Panc1 (cell line): ENCODE measurements at regions of chr11 and their contacts with region 1.

Region 1: GRCh38 chr11:44072757-44073658 is 6.9 kb downstream of the ACCS start:
- DNase-seq: no peak
- ATAC-seq: no peak
- H3K4me3 ChIP-seq: no peak overlapping the region
- H3K27ac ChIP-seq: no peak overlapping the region
- H3K4me1 ChIP-seq: no peaks in the 10 kb centered on the region
- H3K27me3 ChIP-seq: no peaks in the 10 kb centered on the region
- CTCF ChIP-seq: no peak

Region 2: DNA sequence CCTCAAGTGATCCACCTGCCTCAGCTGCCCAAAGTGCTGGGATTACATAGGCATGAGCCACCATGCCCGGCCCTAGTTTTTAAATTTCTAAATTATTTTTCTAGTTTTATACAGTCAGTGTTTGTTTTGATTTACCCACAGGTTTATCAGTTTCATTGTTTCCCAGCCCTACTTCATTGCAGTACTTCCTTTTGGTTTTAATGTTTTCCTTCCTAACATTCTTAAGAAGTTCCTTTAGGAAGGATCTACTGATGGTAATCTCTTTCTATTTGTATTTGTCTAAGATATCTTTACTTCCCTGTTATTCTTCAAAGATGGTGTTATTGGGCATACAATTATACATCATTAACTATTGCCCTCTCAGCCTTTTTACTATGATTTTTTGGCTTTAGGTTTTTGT is 17.5 kb after region 1 on chr11:
- CTCF ChIA-PET with region 1: interaction called, 10 read pairs
- POLR2A ChIA-PET with region 1: interaction called, 16 read pairs
- in situ Hi-C with region 1: no loop called
- intact Hi-C with region 1: no loop called
- DNase-seq: no peak
- ATAC-seq: no peak
- H3K4me3 ChIP-seq: no peak overlapping the region
- H3K27ac ChIP-seq: no peak overlapping the region
- H3K4me1 ChIP-seq: peaks cover 5% of the 10 kb centered on the region; the same call in 1 of the 2 replicates
- H3K27me3 ChIP-seq: no peaks in the 10 kb centered on the region
- CTCF ChIP-seq: no peak

Region 3: GRCh38 chr11:44095506-44096394 is 22.7 kb after region 1 on chr11 and contains the start of gene EXT2:
- CTCF ChIA-PET with region 1: interaction called, 10 read pairs
- POLR2A ChIA-PET with region 1: no interaction called
- in situ Hi-C with region 1: no loop called
- intact Hi-C with region 1: no loop called
- DNase-seq: no peak
- ATAC-seq: peak; percentile 97
- H3K4me3 ChIP-seq: peak within 1 kb of the TSS; percentile 72 to 75
- H3K27ac ChIP-seq: peak within 1 kb of the TSS; percentile 54; the same call in 1 of the 2 replicates
- H3K4me1 ChIP-seq: peaks cover 10% of the 10 kb centered on the region; the same call in 1 of the 2 replicates
- H3K27me3 ChIP-seq: no peaks in the 10 kb centered on the region
- CTCF ChIP-seq: peak; percentile 96
- total RNA-seq, gene EXT2: 57.5 TPM

Region 4: DNA sequence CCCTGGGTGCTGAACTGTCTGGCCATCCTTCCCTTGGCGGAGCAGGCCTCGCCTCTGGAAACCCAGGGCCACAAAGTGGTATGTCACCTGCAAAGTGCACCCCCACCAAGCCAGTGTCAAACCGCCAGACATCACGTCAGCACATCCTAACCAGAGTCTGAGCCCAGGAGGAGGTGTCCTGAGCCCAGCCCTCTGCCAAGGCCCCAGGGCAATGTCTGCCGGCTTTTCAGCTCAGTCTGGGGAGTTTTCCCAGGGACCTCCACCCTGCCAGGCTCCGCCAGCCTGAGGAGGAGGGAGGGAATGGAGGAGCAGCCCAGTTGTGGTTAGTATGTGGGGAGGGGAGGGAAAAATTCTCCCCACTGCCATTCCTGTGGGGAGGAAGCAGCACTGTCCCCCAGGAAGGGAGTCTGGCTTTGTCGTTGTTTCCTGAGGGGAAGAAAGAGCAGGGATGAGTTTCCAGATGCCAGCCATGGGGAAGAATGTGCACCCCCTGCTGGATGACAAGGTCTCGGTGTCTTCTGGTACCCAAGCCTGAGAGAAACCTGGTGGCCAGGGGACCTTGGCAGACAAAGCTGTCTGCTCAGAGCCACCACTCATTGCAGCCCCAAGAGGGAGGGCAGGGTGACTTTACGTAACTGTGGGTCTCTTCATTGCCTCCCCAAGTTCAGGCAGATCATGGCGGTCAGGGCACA is 411.1 kb after region 1 on chr11:
- CTCF ChIA-PET with region 1: no interaction called
- POLR2A ChIA-PET with region 1: no interaction called
- in situ Hi-C with region 1: no loop called
- intact Hi-C with region 1: no loop called
- DNase-seq: no peak
- ATAC-seq: no peak
- H3K4me3 ChIP-seq: no peak overlapping the region
- H3K27ac ChIP-seq: no peak overlapping the region
- H3K4me1 ChIP-seq: no peaks in the 10 kb centered on the region
- H3K27me3 ChIP-seq: 0 out of 2 replicates have a peak, but pooled peaks cover 2% of the 10 kb centered on the region
- CTCF ChIP-seq: peak; percentile 60